Transverse colon (tissue), 4 donors: ENCODE measurements at regions of chr6 and their contacts with region 1.

Region 1: GRCh38 chr6:35731736-35732532 is 4.9 kb upstream of the ARMC12 start:
- DNase-seq: peak; percentile 99
- H3K4me3 ChIP-seq: peak overlapping the region; percentile 50 to 63 (median 56)
- H3K27ac ChIP-seq: peak overlapping the region; percentile 99 to 100 (median 100)
- H3K4me1 ChIP-seq: peaks cover 57 to 89% (median 78%) of the 10 kb centered on the region in 4 donors
- H3K27me3 ChIP-seq: no peaks in the 10 kb centered on the region
- CTCF ChIP-seq: peak in 2 of 5 experiments; percentile 8 to 16
- EP300 ChIP-seq: peak; percentile 99
- POLR2A ChIP-seq: peak; percentile 65

Region 2: GRCh38 chr6:35342258-35343091 is 389.5 kb before region 1 on chr6 and contains the start of gene PPARD:
- in situ Hi-C with region 1: loop called in 1 of 4 experiments (anchors 25 kb)
- intact Hi-C with region 1: no loop called
- DNase-seq: peak; percentile 99
- H3K4me3 ChIP-seq: peak within 1 kb of the TSS; percentile 80 to 99 (median 94)
- H3K27ac ChIP-seq: peak within 1 kb of the TSS; percentile 88 to 96 (median 90)
- H3K4me1 ChIP-seq: peaks cover 4 to 30% (median 13%) of the 10 kb centered on the region in 4 donors
- H3K27me3 ChIP-seq: peaks cover 2% of the 10 kb centered on the region
- CTCF ChIP-seq: peak; percentile 95 to 99 (median 97)
- EP300 ChIP-seq: no peak
- POLR2A ChIP-seq: peak; percentile 81
- total RNA-seq, gene PPARD: 19.8 to 110 (median 29.3) TPM

Region 3: GRCh38 chr6:35576682-35577081 is 155.3 kb before region 1 on chr6:
- in situ Hi-C with region 1: loop called (anchors 5 to 10 kb)
- intact Hi-C with region 1: loop called (anchors 5 kb)
- DNase-seq: no peak
- H3K4me3 ChIP-seq: no peak overlapping the region
- H3K27ac ChIP-seq: no peak overlapping the region
- H3K4me1 ChIP-seq: no peaks in the 10 kb centered on the region
- H3K27me3 ChIP-seq: no peaks in the 10 kb centered on the region
- CTCF ChIP-seq: no peak
- EP300 ChIP-seq: no peak
- POLR2A ChIP-seq: no peak

Region 4: GRCh38 chr6:35601331-35602132 is 130.4 kb before region 1 on chr6:
- in situ Hi-C with region 1: no loop called
- intact Hi-C with region 1: loop called (anchors 1 kb)
- DNase-seq: peak; percentile 69
- H3K4me3 ChIP-seq: peak overlapping the region in 1 of 4 donors; percentile 23
- H3K27ac ChIP-seq: peak overlapping the region; percentile 87 to 90 (median 88)
- H3K4me1 ChIP-seq: peaks cover 28 to 75% (median 48%) of the 10 kb centered on the region in 4 donors
- H3K27me3 ChIP-seq: no peaks in the 10 kb centered on the region
- CTCF ChIP-seq: peak in 1 of 5 experiments; percentile 6
- EP300 ChIP-seq: peak; percentile 100
- POLR2A ChIP-seq: peak; percentile 23

Region 5: DNA sequence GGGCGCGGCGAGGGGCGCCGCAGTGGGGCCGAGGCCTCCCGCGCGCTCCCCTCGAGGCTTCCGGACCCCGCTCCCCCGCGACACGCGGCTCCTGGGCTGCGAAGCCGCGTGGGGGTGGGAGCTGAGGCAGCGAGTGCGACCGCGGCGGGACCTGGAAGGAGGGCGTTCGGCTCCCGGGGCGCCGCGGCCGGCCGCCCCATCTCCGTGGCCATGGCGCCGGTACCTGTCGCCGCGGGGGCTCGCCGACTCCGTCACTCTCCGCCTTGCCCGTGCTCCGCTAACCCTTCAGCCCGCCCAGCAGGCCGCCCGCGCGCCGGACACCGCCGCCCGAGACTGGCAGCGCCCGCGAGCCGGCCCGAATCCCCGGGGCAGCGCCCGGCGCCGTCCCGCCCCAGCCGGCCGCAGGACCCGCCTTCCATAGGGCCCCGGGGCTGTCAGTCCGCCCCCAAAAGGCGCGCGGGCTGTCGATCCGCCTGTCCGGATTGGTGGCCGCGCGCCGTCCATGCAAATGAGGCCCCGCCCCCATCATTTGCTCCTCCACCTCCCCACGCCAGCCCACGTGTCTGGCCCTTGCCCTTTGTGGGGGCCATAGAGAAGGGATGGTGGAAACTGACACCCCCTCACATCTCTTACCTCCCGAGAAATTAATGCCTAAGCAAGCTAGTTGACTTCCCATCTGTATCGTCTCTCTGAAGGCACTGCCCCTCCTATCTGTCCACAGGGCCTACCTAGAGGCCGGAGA is 43.2 kb before region 1 on chr6 and contains the start of gene FKBP5:
- in situ Hi-C with region 1: loop called in 2 of 4 experiments (anchors 5 kb)
- intact Hi-C with region 1: loop called (anchors 2 kb)
- DNase-seq: peak; percentile 97
- H3K4me3 ChIP-seq: peak within 1 kb of the TSS; percentile 84 to 98 (median 92)
- H3K27ac ChIP-seq: peak within 1 kb of the TSS; percentile 97 to 99 (median 98)
- H3K4me1 ChIP-seq: peaks cover 18 to 37% (median 30%) of the 10 kb centered on the region in 4 donors
- H3K27me3 ChIP-seq: no peaks in the 10 kb centered on the region
- CTCF ChIP-seq: peak in 1 of 5 experiments; percentile 24
- EP300 ChIP-seq: no peak
- POLR2A ChIP-seq: peak; percentile 81
- total RNA-seq, gene FKBP5: 82.8 to 299 (median 254) TPM

Region 6: GRCh38 chr6:35905841-35906498 is 174.0 kb after region 1 on chr6:
- in situ Hi-C with region 1: no loop called
- intact Hi-C with region 1: no loop called
- DNase-seq: no peak
- H3K4me3 ChIP-seq: no peak overlapping the region
- H3K27ac ChIP-seq: no peak overlapping the region
- H3K4me1 ChIP-seq: no peaks in the 10 kb centered on the region
- H3K27me3 ChIP-seq: no peaks in the 10 kb centered on the region
- CTCF ChIP-seq: no peak
- EP300 ChIP-seq: no peak
- POLR2A ChIP-seq: no peak